ENCODE measurements at regions of chr6 and their contacts with region 1.

Region 1: GRCh38 chr6:108113557-108114519 is 39.3 kb upstream of the OSTM1 start:
- DNase-seq: peak in 1 of 2 experiments; percentile 67
- H3K4me3 ChIP-seq: no peak overlapping the region
- H3K4me3 Mint-ChIP-seq: no peak overlapping the region
- H3K27ac Mint-ChIP-seq: no peak overlapping the region
- H3K4me1 ChIP-seq: no peaks in the 10 kb centered on the region
- H3K4me1 Mint-ChIP-seq: peaks cover 7% of the 10 kb centered on the region
- H3K27me3 ChIP-seq: no peaks in the 10 kb centered on the region
- H3K27me3 Mint-ChIP-seq: no peaks in the 10 kb centered on the region
- CTCF ChIP-seq: peak; percentile 49 to 60

Region 2: GRCh38 chr6:108157234-108157980 is 43.6 kb after region 1 on chr6:
- CTCF ChIA-PET with region 1: no interaction called
- POLR2A ChIA-PET with region 1: no interaction called
- intact Hi-C with region 1: loop called (anchors 5 kb)
- DNase-seq: no peak
- H3K4me3 ChIP-seq: peak overlapping the region; percentile 39
- H3K4me3 Mint-ChIP-seq: peak overlapping the region; percentile 66
- H3K27ac Mint-ChIP-seq: no peak overlapping the region
- H3K4me1 ChIP-seq: peaks cover 8% of the 10 kb centered on the region
- H3K4me1 Mint-ChIP-seq: peaks cover 14% of the 10 kb centered on the region
- H3K27me3 ChIP-seq: peaks cover 2% of the 10 kb centered on the region; the same call in 1 of the 2 replicates
- H3K27me3 Mint-ChIP-seq: peaks cover 8% of the 10 kb centered on the region
- CTCF ChIP-seq: no peak

Region 3: DNA sequence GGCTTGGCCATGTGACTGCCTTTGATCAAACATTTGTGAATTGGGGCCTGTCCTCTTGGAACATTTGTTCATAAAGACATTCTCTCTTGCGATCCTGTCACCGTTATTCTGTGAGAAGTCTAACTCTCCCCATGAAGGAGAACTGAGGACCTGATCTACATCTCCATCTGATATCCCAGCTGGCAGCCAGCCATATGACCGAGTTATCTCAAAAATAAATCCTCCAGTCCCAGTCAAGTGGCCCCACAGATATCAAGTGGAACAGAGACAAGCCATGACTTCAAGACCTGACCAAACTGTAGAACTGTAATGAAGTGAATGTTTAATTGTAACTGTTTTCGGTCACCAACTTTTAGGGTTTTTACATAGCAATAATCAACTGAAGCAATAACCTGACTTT is 121.3 kb after region 1 on chr6:
- CTCF ChIA-PET with region 1: no interaction called
- POLR2A ChIA-PET with region 1: no interaction called
- intact Hi-C with region 1: no loop called
- DNase-seq: no peak
- H3K4me3 ChIP-seq: no peak overlapping the region
- H3K4me3 Mint-ChIP-seq: no peak overlapping the region
- H3K27ac Mint-ChIP-seq: no peak overlapping the region
- H3K4me1 ChIP-seq: no peaks in the 10 kb centered on the region
- H3K4me1 Mint-ChIP-seq: peaks cover 7% of the 10 kb centered on the region
- H3K27me3 ChIP-seq: no peaks in the 10 kb centered on the region
- H3K27me3 Mint-ChIP-seq: no peaks in the 10 kb centered on the region
- CTCF ChIP-seq: no peak

Region 4: DNA sequence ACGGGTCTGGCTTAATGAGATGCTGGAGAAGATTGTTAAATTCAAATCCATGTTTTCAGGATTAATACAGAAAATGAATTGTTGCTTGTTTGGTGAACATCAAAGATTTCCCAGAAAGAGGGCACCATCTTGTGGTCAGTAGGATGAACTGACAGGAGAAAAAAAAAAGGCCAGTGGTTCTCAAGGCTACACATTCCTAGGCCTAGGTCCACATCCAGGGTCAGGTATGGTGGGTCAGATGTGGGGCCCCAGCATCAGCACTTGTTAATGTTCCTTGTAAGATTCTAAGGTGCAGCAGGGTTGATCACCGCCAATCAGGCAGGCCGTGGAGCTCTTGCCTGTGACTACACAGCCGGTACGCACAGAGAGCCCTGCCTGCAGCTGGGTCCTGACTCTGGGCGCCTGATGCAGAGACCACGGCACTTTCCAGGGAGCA is 412.9 kb after region 1 on chr6:
- CTCF ChIA-PET with region 1: no interaction called
- POLR2A ChIA-PET with region 1: no interaction called
- intact Hi-C with region 1: loop called (anchors 1 kb)
- DNase-seq: peak in 1 of 2 experiments; percentile 31
- H3K4me3 ChIP-seq: no peak overlapping the region
- H3K4me3 Mint-ChIP-seq: no peak overlapping the region
- H3K27ac Mint-ChIP-seq: no peak overlapping the region
- H3K4me1 ChIP-seq: peaks cover 8% of the 10 kb centered on the region
- H3K4me1 Mint-ChIP-seq: peaks cover 9% of the 10 kb centered on the region
- H3K27me3 ChIP-seq: no peaks in the 10 kb centered on the region
- H3K27me3 Mint-ChIP-seq: no peaks in the 10 kb centered on the region
- CTCF ChIP-seq: peak; percentile 69 to 78